Prostate gland (tissue), 2 donors: ENCODE measurements at regions of chr15 and their contacts with region 1.

Region 1: DNA sequence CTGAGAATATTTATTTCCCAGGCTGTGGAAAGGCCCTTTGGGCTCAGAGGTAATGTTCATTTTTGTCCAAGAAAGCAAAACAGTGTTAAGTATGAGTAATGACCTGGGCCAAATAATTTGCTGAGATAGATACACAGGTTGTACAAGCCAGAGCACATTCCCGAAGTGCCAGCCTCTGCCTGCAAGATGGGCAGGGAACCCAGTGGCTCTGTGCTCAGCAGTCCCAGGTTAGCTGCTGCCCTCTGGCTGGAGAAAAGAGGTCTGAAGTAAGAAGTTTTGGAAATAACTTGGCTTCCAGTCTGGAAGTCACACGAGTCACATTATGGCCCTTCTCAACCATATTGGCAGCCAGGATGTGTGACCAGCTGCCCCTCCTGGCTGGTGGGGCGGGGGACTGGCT is 20.2 kb downstream of the MYZAP start:
- DNase-seq: peak; percentile 90
- H3K4me3 ChIP-seq: no peak overlapping the region
- H3K27ac ChIP-seq: peak overlapping the region; percentile 65 to 74
- H3K4me1 ChIP-seq: peaks cover 15% of the 10 kb centered on the region
- H3K27me3 ChIP-seq: no peaks in the 10 kb centered on the region
- CTCF ChIP-seq: peak; percentile 24 to 87 (median 69)
- POLR2A ChIP-seq: no peak

Region 2: DNA sequence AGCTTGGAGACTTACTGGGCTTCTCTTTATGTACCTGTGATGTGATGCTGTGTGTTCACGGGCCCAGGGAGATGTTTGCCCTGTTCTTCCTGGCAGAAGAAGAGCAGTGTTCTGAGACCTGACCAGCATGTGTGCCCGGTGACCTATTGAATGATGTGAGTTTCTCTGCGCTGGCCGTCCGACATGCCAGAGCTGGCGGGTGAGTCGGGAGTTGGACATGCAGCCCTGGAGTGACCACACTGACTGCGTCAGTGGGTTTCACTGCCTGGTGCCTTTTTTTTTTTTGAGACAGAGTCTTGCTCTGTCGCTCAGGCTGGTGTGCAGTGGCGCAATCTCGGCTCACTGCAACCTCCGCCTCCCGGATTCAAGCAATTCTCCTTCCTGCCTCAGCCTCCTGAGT is 193.3 kb before region 1 on chr15:
- intact Hi-C with region 1: no loop called
- DNase-seq: no peak
- H3K4me3 ChIP-seq: no peak overlapping the region
- H3K27ac ChIP-seq: no peak overlapping the region
- H3K4me1 ChIP-seq: no peaks in the 10 kb centered on the region
- H3K27me3 ChIP-seq: no peaks in the 10 kb centered on the region
- CTCF ChIP-seq: no peak
- POLR2A ChIP-seq: no peak

Region 3: DNA sequence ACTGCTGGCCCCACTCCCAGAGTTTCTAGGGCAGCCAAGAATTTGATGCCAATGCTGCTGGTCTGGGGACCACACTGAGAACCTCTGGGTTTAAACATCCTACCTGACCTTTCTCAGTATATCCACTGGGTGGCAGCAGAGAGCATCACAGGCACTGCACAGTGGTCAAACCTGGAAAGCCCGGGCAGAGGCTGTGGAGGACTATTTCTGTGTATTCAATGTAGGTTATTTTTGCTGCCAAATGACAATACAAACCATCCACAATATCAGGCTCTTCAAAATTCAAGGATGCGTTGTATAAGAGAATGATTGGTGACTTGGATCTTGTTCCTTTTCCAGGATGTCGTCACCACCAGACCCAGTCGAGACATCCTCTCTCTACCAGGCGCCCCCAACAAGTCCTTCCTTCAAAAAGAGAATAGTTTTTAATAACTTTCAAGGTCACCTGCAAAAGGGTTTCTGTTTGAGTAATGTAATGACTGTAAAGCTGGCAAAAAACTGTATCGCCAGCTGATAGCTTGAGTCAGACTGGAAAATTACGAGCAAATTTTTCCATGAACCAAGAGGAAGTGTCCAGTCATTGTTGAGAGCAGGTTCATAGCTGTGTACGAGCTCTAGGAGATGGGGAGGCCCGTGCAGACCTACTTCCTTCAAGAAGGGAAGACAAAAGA is 50.8 kb before region 1 on chr15:
- intact Hi-C with region 1: loop called (anchors 2 kb)
- DNase-seq: peak; percentile 78
- H3K4me3 ChIP-seq: no peak overlapping the region
- H3K27ac ChIP-seq: no peak overlapping the region
- H3K4me1 ChIP-seq: no peaks in the 10 kb centered on the region
- H3K27me3 ChIP-seq: no peaks in the 10 kb centered on the region
- CTCF ChIP-seq: peak; percentile 73 to 94 (median 92)
- POLR2A ChIP-seq: no peak

Region 4: DNA sequence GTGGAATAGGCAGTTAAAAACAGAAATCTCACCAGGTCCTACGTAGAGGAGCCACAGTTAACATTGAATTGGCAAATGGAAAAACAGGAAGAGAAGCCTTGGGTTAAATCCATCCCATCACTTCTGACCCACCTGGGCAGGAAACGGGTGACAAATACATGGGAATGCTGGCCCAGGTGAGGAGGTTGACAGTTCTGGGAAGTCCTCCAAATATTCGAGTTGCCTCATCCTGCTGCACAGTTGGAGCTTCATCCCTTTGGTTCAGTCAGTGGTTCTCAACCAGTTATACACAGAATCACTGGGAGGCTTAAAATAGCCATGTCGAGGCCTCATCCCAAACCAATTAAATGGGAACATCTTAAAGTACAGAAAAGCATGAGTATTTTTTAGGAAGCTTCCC is 15.0 kb before region 1 on chr15:
- intact Hi-C with region 1: loop called (anchors 2 kb)
- DNase-seq: peak; percentile 79
- H3K4me3 ChIP-seq: no peak overlapping the region
- H3K27ac ChIP-seq: peak overlapping the region; percentile 58 to 62
- H3K4me1 ChIP-seq: no peaks in the 10 kb centered on the region
- H3K27me3 ChIP-seq: no peaks in the 10 kb centered on the region
- CTCF ChIP-seq: no peak
- POLR2A ChIP-seq: no peak

Region 5: GRCh38 chr15:57635300-57635909 is 23.5 kb after region 1 on chr15:
- intact Hi-C with region 1: loop called (anchors 2 kb)
- DNase-seq: peak; percentile 79
- H3K4me3 ChIP-seq: no peak overlapping the region
- H3K27ac ChIP-seq: peak overlapping the region; percentile 62 to 70
- H3K4me1 ChIP-seq: peaks cover 10% of the 10 kb centered on the region
- H3K27me3 ChIP-seq: no peaks in the 10 kb centered on the region
- CTCF ChIP-seq: peak in 1 of 4 experiments; percentile 25
- POLR2A ChIP-seq: no peak

Region 6: DNA sequence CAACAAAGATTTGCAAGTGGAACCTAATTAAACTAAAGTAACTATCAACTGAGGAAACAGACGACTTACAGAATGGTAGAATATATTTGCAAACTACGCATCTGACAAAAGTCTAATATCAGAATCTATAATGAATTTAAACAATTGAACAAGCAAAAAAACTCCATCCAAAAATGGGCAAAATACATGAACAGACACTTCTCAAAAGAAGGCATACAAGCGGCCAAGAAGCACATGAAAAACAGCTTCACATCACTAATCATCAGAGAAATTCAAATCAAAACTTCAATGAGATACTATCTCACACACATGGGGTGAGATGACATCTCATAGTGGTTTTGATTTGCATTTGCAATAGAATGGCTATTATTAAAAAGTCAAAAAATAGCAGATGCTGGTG is 223.2 kb after region 1 on chr15:
- intact Hi-C with region 1: no loop called
- DNase-seq: no peak
- H3K4me3 ChIP-seq: no peak overlapping the region
- H3K27ac ChIP-seq: no peak overlapping the region
- H3K4me1 ChIP-seq: no peaks in the 10 kb centered on the region
- H3K27me3 ChIP-seq: no peaks in the 10 kb centered on the region
- CTCF ChIP-seq: no peak
- POLR2A ChIP-seq: no peak